GM18951 (cell line): ENCODE measurements at regions of chr18 and their contacts with region 1.

Region 1: DNA sequence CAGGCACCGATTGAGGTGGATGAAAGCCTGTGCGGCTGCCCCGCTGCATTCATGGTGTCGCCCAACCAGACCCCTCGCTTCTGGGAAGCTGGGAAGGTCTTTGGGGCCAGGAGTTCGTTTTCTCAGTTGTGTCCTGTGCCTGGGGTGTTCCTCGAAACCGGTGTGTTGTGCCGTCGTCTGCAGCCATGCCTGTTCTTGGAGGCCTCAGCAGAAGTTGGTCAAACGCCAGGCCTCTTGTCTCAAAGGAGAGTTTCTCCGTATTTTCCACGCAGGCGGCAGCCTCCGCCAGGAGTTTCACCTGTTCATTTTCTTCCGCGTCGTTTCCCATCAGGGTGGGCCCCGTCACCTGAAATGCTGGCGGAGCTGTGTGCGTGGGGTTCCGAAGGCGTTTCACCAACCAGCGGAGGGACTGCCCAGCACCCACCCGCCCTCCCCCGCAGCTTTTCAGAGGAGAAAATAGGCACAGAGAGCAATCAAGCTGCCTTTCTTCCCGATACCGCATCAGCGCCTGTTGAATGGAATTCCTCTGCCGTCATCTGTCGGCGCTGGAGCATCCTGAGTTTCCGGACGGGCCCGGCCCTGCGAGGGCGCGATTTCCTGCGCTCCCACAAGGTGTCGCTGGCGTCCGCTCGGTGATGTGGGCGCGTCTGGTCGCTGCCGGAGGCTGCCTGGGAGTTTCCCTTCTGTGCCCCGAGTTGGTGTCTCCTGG is 17.0 kb upstream of the NFATC1 start:
- POLR2A ChIP-seq: no peak

Region 2: DNA sequence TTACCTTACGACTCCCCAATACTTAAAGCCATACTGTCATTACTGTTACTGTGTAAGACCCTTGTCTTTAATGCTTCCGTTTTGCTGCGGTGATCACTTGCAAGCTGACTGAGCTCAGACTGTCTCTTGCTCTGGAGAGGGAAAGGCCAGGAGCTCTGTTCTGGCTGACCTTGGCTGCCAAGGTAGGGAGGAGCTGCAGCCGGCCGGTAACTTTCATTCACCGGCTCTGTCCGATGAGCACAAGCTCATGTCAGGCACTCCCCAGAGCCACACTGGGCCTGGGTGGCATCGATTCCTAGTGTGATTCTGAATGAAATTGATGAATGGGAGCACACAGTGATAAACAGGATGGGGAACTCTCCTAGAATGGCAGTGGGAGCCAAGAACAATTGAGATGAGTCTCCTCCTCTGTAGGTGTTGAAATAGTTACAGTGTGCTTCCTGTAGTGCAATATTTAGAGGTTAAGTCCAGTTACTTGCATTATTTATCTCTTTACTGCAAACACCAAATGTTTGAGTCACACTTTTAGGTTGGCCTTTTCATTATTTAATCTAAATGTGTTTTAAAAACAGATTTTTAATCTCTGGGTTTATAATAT is 208.6 kb before region 1 on chr18:
- in situ Hi-C with region 1: no loop called
- POLR2A ChIP-seq: no peak

Region 3: GRCh38 chr18:79532328-79533007 is 153.8 kb after region 1 on chr18:
- in situ Hi-C with region 1: loop called (anchors 5 kb)
- POLR2A ChIP-seq: no peak

Region 4: DNA sequence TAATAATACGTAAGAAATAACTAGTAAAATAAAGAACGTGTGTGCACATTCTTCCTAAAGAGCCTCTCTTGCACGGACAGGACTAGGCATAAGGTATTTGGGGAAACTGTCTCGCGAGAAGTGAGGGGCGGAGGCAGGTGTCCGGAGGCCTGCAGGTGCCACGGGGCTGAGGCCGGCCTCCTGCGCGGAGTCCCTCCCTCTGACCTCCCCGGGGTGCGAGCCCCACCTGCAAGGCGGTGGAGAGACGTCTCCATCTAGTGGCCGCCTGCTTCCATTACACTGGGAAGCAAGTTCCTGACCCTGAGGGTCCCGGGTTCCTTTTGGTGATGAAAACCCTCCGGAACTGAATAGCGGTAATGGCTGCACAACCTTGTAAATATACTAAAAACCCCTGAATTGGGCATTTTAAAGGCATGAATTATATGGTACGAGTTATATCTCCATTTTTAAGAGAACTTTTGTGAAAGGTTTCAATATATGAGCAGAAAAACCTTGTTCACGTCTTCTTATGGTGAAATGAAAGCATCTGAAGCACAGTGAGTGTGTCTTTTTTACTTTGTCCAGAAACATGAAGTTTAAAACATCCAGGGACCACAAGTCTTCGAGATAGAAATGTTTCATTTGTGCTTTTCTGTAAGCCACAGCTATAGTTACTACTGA is 265.4 kb after region 1 on chr18:
- in situ Hi-C with region 1: loop called (anchors 5 kb)
- POLR2A ChIP-seq: no peak